Right ventricle myocardium inferior (tissue), 1 donor: ENCODE measurements at regions of chr7 and their contacts with region 1.

Region 1: GRCh38 chr7:73667344-73668102 is at the start of gene VPS37D:
- DNase-seq: peak; percentile 96
- ATAC-seq: peak; percentile 97
- total RNA-seq, gene VPS37D: 3.0 TPM

Region 2: DNA sequence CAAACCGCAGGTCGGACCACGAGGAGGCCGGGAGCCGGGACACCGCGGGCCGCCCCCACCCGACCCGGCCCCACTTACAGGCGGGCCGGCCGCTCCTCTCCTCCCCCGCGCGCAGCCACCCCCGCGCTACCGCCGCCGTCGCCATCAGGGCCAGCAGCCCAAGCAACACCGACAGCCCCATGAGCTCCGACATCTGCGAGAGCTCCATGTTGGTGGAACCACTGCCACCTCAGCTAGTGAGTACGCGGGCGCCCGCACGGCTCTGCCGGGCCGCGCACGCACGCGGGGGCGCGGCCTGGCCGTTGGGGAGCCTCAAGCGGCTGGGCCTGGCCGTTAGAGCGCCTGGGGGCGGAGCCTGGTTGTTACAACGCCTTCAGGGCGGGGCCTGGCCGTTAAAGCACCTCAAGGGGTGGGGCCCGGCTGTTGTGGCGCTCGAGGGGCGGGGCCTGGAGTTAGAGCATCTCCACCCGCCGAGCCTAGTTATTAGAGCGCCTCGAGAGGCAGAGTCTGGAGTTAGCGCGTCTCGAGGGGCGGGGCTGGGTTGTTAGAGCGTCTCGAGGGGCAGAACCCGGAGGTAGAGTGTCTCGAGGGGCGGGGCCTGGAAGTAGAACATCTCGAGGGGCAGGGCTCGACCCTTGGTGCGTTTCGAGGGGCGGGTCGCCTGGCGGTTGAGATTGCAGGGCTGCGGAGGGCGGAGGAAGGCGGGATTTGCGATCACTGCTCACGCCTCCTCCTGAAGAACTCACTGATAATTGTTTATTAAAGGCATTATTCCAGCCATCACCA is 89.0 kb before region 1 on chr7 and contains the start of gene TBL2:
- intact Hi-C with region 1: no loop called
- DNase-seq: peak; percentile 100
- ATAC-seq: peak; percentile 98
- total RNA-seq, gene TBL2: 10.4 TPM

Region 3: GRCh38 chr7:73683056-73683964 is 15.8 kb after region 1 on chr7 and contains the starts of genes BUD23 and DNAJC30:
- intact Hi-C with region 1: loop called (anchors 1 kb)
- DNase-seq: peak; percentile 98
- ATAC-seq: peak; percentile 97
- total RNA-seq, gene BUD23: 81.1 TPM
- total RNA-seq, gene DNAJC30: 13.8 TPM